ENCODE measurements at regions of chr1 and their contacts with region 1.

Region 1: GRCh38 chr1:91511386-91511785 is 10.7 kb downstream of the CDC7 start:
- DNase-seq: no peak
- H3K4me3 ChIP-seq: no peak overlapping the region
- H3K27me3 ChIP-seq: no peaks in the 10 kb centered on the region
- CTCF ChIP-seq: peak; percentile 64

Region 2: GRCh38 chr1:91500756-91501522 is 10.4 kb before region 1 on chr1 and contains the start of gene CDC7:
- CTCF ChIA-PET with region 1: interaction called, 33 read pairs
- POLR2A ChIA-PET with region 1: no interaction called
- DNase-seq: peak; percentile 53
- H3K4me3 ChIP-seq: peak within 1 kb of the TSS; percentile 60
- H3K27me3 ChIP-seq: no peaks in the 10 kb centered on the region
- CTCF ChIP-seq: peak; percentile 39; the same call in 1 of the 2 replicates
- polyA plus RNA-seq, gene CDC7: 2.6 and 2.8 TPM in 2 replicates

Region 3: DNA sequence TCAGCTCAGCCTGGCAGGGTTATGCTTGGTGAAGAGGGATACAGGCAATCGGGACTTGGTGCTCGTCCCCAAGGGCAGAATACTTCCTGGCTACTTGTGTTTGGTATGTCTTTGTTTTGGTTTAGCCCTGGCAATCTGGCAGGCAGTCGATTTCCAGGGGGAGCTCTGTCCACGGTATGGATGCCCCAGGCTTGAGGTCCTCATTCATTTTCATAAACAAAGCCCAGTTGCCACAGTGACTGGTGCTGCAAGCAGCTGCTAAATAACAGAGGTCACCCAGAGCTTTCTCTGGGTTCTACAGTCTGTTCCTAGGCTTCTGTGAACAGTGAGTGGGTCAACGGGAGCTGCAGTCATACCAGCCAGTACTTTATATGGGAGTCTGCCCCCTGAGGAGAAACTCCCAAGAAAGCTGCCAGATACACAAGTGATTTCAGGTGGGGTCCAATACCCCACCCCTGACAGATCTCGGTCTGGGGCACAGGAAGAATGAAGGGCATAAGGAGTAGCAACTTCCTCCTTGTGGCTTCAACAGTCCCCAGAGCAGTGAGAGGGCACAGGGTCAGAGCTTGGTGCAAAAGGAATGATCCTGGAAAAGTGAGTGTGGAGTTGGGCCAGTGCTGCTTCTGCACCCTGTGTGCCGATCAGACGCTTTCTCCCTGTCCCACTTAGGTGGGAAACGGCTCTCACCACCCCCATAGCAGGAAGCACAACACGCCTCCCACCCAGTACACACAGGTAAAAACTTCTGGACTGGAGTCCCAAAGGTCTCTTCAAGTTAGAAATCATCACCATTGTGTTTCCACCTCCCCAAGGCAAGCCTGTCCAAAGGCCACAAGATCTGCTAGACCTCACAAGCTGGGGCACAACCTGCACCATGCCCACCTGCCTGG is 319.1 kb after region 1 on chr1:
- CTCF ChIA-PET with region 1: interaction called, 14 read pairs
- POLR2A ChIA-PET with region 1: no interaction called
- DNase-seq: peak; percentile 77
- H3K4me3 ChIP-seq: no peak overlapping the region
- H3K27me3 ChIP-seq: no peaks in the 10 kb centered on the region
- CTCF ChIP-seq: peak; percentile 71

Region 4: DNA sequence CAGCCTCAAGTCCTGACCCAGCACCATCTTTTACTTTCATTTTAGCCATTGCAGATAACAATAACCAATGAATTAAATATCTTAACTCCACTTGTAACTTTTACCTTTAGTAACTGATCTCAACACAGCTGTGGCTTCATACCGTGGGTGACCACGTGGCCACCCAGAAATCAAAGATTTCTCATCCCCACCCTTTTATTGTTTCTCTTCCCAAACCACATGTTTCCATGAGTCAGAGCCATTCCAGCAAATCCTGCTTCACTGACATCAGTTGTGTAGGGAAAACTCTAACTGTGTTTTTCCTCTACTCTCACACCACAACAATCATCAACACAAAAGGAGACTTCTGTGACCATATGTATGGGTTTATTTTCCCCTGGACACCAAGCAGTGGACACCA is 412.8 kb after region 1 on chr1:
- CTCF ChIA-PET with region 1: interaction called, 172 read pairs
- POLR2A ChIA-PET with region 1: no interaction called
- DNase-seq: peak; percentile 53
- H3K4me3 ChIP-seq: no peak overlapping the region
- H3K27me3 ChIP-seq: no peaks in the 10 kb centered on the region
- CTCF ChIP-seq: no peak

Region 5: GRCh38 chr1:92291372-92291999 is 780.1 kb after region 1 on chr1:
- CTCF ChIA-PET with region 1: interaction called, 13 read pairs
- POLR2A ChIA-PET with region 1: no interaction called
- DNase-seq: no peak
- H3K4me3 ChIP-seq: no peak overlapping the region
- H3K27me3 ChIP-seq: no peaks in the 10 kb centered on the region
- CTCF ChIP-seq: peak; percentile 79

Measured in BJ (cell line).